A549 (cell line): ENCODE measurements at regions of chr2 and their contacts with region 1.

Region 1: DNA sequence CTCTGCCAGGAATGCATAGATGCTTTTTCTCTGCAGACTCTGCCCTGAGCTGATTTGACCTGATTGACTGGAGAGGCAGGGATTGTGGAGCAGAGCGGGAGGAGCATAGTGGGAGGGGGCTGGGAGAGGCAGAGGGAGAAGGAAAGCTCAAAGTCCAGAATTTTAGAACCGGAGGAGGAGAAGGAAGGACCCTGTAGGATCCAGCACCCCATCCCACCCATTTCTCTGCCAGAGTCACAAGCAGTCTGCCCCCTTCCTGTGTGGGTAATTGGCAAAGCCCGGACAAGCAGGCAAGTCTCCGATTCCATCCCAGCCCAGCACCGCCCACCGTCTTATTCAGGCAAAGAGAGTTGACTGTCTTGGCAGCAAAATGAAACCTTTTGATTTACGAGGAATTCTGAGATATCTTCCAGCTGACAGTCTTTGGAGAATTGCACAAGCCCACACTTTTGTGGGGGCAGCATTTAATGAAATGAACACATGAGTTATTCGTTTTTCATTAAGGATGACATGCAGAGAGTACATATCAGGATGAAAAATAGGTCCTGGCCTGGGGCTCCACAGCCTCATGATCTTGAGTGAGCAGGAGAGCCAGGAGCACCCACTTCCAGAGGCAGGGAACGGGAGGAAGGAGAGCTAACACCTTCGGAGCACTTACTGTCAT is 103.1 kb downstream of the MCFD2 start:
- DNase-seq: peak in 1 of 2 experiments; percentile 55
- ATAC-seq: peak; percentile 58 to 86; a peak in 5 of 6 replicates
- H3K4me3 ChIP-seq: no peak overlapping the region
- H3K27ac ChIP-seq: peak overlapping the region; percentile 65 to 83
- H3K4me1 ChIP-seq: peaks cover 22% of the 10 kb centered on the region
- CTCF ChIP-seq: no peak
- EP300 ChIP-seq: 0 out of 5 replicates have a peak, but pooled peaks of 1 of the 2 experiments have one; percentile 26
- POLR2A ChIP-seq: no peak
- RAD21 ChIP-seq: no peak

Region 2: GRCh38 chr2:46825231-46825943 is 12.9 kb after region 1 on chr2:
- CTCF ChIA-PET with region 1: interaction called, 12 read pairs
- POLR2A ChIA-PET with region 1: no interaction called
- DNase-seq: no peak
- ATAC-seq: no peak
- H3K4me3 ChIP-seq: no peak overlapping the region
- H3K27ac ChIP-seq: peak overlapping the region in 1 of 2 experiments; percentile 60; a peak in 3 of 6 replicates
- H3K4me1 ChIP-seq: peaks cover 9% of the 10 kb centered on the region; the same call in 1 of the 3 replicates
- CTCF ChIP-seq: no peak
- EP300 ChIP-seq: no peak
- POLR2A ChIP-seq: no peak
- RAD21 ChIP-seq: no peak

Region 3: GRCh38 chr2:46954948-46955571 is 142.6 kb after region 1 on chr2:
- CTCF ChIA-PET with region 1: no interaction called
- POLR2A ChIA-PET with region 1: no interaction called
- DNase-seq: peak; percentile 86 to 89
- ATAC-seq: peak; percentile 85 to 90
- H3K4me3 ChIP-seq: no peak overlapping the region
- H3K27ac ChIP-seq: peak overlapping the region; percentile 77 to 85
- H3K4me1 ChIP-seq: peaks cover 55% of the 10 kb centered on the region
- CTCF ChIP-seq: no peak
- EP300 ChIP-seq: no peak
- POLR2A ChIP-seq: no peak
- RAD21 ChIP-seq: 0 out of 5 replicates have a peak, but pooled peaks of 1 of the 2 experiments have one; percentile 25